ENCODE measurements at regions of chr15 and their contacts with region 1.

Region 1: GRCh38 chr15:91852741-91853510 is 582 bp upstream of the SLCO3A1 start:
- DNase-seq: peak; percentile 75 to 85 (median 79)
- H3K4me3 ChIP-seq: peak overlapping the region; percentile 65 to 87 (median 76)
- H3K27ac ChIP-seq: peak overlapping the region; percentile 49 to 76
- H3K4me1 ChIP-seq: peaks cover 47 to 81% (median 71%) of the 10 kb centered on the region in 4 experiments
- H3K27me3 ChIP-seq: no peaks in the 10 kb centered on the region

Region 2: DNA sequence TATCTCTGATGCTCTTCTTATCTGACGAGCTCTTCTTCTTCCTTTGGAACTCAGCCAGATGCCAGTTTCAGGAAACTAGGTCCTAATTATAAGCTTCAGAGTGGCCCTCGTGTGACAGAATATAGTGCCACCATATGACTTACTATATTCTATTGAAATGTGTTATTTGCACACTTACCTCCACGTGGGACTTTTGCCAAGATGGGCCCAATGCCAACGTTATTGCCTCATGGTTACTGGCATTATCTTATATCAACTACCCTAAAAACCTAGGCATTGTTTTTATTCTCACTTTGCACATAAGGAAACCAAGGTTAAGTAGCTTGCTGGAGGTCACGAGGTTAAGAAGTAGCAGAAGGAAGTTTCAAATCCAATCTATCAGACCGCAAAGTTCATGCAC is 70.7 kb before region 1 on chr15:
- CTCF ChIA-PET with region 1: no interaction called
- POLR2A ChIA-PET with region 1: no interaction called
- DNase-seq: no peak
- H3K4me3 ChIP-seq: no peak overlapping the region
- H3K27ac ChIP-seq: no peak overlapping the region
- H3K4me1 ChIP-seq: peaks cover 8 to 29% (median 23%) of the 10 kb centered on the region in 4 experiments
- H3K27me3 ChIP-seq: no peaks in the 10 kb centered on the region

Region 3: GRCh38 chr15:91867581-91868026 is 14.7 kb after region 1 on chr15:
- CTCF ChIA-PET with region 1: interaction called, 33 read pairs
- POLR2A ChIA-PET with region 1: interaction called, 3 read pairs
- DNase-seq: peak in 2 of 3 donors; percentile 37 to 52
- H3K4me3 ChIP-seq: no peak overlapping the region
- H3K27ac ChIP-seq: no peak overlapping the region
- H3K4me1 ChIP-seq: peaks cover 3 to 58% (median 30%) of the 10 kb centered on the region in 4 experiments
- H3K27me3 ChIP-seq: no peaks in the 10 kb centered on the region

Region 4: DNA sequence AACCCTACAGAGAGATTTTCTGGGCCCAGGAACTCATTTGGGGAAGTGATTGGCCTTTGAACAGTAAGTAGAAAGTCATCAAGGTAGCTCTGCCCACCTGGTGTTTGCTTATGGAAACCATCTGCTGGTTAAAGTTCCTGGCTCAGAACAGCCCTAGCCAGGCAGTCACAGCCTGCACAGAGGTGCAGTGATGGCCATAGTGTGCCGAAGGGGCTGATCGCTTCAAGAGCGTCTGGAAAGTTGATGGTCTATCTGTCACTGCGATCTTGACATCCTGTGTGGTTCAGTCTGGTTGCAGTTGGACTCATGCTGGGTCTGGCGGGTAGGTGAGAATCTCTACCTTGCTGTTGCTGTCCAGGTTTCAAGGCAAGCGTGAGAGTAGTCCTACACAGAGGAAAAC is 152.2 kb after region 1 on chr15:
- CTCF ChIA-PET with region 1: no interaction called
- POLR2A ChIA-PET with region 1: no interaction called
- DNase-seq: no peak
- H3K4me3 ChIP-seq: no peak overlapping the region
- H3K27ac ChIP-seq: no peak overlapping the region
- H3K4me1 ChIP-seq: peaks cover 0 to 9% (median 1%) of the 10 kb centered on the region in 4 experiments
- H3K27me3 ChIP-seq: no peaks in the 10 kb centered on the region

Measured in common myeloid progenitor, CD34-positive (primary cell).